Astrocyte of the cerebellum (primary cell): ENCODE measurements at regions of chr12 and their contacts with region 1.

Region 1: DNA sequence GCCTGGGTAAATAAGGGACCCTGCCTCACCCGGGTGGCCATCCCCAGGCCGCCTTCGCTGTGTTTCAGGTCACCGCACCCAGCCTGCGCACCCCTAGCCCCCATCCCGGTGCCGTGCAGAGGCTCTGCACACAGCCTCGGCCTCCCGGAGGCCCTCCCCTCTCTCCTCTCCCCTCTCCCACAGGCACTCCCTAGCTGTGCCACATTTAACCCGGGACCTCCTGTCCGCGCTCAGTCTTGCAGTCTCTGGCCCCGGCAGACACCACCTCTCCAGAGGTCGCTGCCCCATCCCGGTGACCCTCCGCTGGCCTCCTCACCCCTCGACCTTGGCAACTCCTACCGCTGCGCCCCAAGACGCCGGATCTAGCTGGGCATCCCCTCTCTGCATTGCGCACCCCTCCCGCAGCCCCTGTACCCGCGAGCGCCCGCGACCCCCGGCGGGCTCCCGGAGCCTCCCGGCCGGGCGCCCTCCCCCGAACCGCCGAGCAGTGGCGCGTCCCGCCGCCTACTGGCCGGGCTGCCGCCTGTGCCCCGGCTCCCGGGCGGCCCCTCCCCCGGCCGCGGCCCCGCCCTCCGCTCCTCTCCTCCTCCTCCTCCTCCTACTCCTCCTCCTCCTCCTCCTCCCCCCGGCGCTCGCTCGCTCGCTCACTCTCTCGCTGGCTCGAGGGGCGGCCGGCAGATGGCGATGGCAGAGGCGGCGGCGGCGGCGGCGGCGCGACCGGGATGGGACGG is 120.7 kb downstream of the AACS start:
- DNase-seq: peak; percentile 27
- H3K4me3 ChIP-seq: peak within 1 kb of the TSS; percentile 44
- CTCF ChIP-seq: peak; percentile 7

Region 2: DNA sequence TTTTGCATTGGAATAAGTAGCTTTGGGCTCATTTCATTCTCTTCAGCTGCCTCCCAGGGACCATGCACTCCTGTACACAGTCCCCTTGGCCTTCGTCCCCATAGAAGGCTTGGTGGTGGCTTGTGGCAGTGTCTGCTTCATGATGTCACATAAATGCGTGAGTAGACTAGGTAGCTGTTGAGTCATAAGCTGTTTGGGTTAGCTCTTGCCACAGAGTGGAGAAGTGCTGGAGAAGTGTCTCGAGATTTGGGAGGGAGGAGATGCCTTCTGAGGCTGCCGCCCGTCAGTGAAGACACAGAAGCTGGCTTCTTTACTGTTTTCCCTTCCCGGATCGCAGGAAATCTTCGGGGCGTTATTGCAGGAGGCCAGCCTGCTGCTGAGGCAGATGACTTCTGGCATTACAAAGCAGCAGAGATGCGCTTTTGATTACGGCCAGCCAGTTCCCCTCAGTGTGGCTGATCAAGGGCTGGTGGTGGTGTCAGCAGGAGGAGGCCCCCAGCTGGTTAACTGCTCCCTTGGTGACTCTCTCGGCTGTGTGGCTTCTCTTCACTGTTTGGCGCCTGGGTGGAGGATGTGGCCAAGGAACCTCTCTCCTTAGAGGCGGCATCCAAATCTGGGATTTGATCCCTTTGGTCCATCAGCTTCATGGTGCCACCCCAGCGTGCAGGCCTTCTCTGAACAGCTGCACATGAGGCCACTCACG is 53.1 kb before region 1 on chr12:
- in situ Hi-C with region 1: loop called (anchors 5 kb)
- DNase-seq: no peak
- H3K4me3 ChIP-seq: no peak overlapping the region
- CTCF ChIP-seq: no peak

Region 3: GRCh38 chr12:125149160-125150108 is 36.5 kb before region 1 on chr12:
- in situ Hi-C with region 1: no loop called
- DNase-seq: no peak
- H3K4me3 ChIP-seq: no peak overlapping the region
- CTCF ChIP-seq: no peak

Region 4: GRCh38 chr12:125296701-125297100 is 110.8 kb after region 1 on chr12:
- in situ Hi-C with region 1: no loop called
- DNase-seq: no peak
- H3K4me3 ChIP-seq: no peak overlapping the region
- CTCF ChIP-seq: no peak